AG04450 (cell line): ENCODE measurements at regions of chr12 and their contacts with region 1.

Region 1: DNA sequence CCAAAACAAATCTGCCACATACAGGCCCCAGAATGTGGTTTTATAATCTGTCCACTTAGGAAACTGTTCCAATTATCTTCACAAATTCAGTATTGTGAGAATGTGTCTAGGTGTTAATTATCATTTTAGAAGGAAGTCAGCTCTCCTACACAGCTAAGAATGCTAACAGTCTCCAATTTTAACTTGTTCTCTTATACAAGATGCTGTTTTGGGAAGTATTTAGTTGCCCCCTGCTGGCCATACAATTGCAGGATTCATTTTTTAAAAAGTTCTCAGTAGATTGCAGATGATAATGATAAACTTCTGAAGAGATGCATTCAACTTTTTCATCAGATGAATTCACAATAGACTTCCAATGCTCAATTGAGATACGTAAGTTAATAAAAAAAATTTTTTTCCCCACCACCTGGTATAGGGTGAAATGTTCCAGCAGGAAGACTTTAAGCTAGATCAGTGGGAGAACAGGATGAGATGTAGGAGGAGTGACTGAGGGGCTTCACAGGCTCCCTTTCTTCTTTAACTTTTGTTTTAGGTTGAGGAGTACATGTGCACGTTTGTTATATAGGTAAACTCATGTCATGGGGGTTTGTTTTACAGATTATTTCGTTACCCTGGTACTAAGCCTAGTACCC is 27.3 kb upstream of the OSBPL8 start:
- DNase-seq: peak; percentile 18
- H3K4me3 ChIP-seq: no peak overlapping the region
- H3K27ac ChIP-seq: no peak overlapping the region
- H3K27me3 ChIP-seq: no peaks in the 10 kb centered on the region
- CTCF ChIP-seq: peak; percentile 75

Region 2: GRCh38 chr12:76083246-76083903 is 503.5 kb before region 1 on chr12:
- CTCF ChIA-PET with region 1: interaction called, 10 read pairs
- POLR2A ChIA-PET with region 1: no interaction called
- DNase-seq: no peak
- H3K4me3 ChIP-seq: peak overlapping the region; percentile 88
- H3K27ac ChIP-seq: peak overlapping the region; percentile 92
- H3K27me3 ChIP-seq: no peaks in the 10 kb centered on the region
- CTCF ChIP-seq: no peak

Region 3: DNA sequence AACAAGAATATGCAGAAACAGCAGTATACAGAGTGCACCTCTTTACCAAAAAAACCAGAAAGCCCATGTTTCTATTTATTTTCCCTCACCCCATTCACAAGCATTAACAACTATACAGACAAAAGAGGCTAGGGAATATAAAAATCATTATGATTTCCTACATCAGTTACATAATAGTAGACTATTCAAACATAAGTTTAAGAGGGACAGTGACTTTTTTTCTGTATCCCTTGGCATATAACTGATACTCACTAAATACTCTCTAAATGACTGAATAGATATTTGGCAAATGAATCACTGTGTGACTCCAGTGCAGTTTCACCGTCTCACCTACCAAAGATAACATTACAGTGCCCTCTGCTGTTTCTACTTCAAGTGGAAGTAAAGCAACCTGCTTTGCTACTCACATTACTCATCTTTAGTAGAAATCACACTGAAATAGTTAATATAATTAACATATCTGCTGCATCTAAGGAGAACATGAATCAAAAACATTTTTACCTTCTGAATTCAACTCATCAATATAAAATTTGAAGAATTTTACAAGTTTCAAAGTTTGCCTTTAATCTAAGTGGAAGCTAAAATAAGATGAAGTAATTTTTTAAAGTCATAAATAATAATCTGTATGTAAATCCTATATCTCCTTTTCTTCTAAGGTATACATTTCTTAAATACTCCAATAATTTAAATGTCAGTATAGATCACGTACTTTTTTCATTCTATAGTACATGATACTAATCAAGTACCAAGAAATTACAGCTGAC is 131.1 kb before region 1 on chr12:
- CTCF ChIA-PET with region 1: interaction called, 14 read pairs
- POLR2A ChIA-PET with region 1: no interaction called
- DNase-seq: peak; percentile 79
- H3K4me3 ChIP-seq: no peak overlapping the region
- H3K27ac ChIP-seq: no peak overlapping the region
- H3K27me3 ChIP-seq: no peaks in the 10 kb centered on the region
- CTCF ChIP-seq: peak; percentile 76

Region 4: GRCh38 chr12:76604099-76604498 is 17.2 kb after region 1 on chr12:
- CTCF ChIA-PET with region 1: interaction called, 16 read pairs
- POLR2A ChIA-PET with region 1: no interaction called
- DNase-seq: no peak
- H3K4me3 ChIP-seq: no peak overlapping the region
- H3K27ac ChIP-seq: no peak overlapping the region
- H3K27me3 ChIP-seq: no peaks in the 10 kb centered on the region
- CTCF ChIP-seq: no peak

Region 5: DNA sequence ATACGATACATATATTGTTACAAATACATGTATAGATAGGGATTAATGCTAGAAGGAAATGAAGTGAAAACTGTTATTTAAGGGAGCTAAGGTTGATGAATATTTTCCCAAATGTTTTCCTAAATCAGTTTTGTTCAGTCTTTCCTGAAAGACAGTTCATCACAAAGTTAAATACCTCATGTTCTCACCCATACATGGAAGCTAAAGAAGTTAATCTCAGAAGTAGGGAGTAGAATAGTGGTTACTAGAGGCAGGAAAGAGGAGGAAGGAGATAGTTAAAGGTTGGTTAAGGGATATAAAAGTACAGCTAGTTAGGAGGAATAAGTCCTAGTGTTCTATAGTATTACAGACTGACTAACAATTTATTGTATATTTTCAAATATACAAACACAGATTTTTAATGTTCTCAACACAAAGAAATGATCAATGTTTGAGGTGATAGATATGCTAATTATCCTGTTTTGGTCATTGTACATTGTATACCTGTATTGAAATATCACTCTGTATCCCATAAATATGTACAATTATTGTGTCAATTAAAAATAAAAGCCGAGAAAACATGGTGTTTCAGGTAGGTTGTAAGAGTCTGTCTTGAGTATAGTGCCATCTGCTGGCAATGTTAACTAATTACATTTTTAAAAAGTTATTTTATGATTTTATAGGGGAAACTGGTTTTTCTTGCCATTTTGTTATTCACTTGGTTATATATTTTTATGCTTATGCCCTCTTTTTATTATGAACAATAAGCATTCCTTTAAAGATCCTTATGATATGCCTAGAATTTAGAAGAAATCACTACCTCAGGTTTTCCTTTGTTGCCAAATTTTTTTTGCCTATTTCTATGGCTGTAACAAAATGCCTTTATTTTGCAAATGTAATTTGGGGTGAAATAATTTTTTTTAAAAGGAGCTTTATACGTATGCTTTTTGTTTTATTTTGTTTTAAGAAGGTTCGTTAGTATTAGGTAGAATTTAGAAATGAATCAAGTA is 204.0 kb after region 1 on chr12:
- CTCF ChIA-PET with region 1: interaction called, 16 read pairs
- POLR2A ChIA-PET with region 1: no interaction called
- DNase-seq: no peak
- H3K4me3 ChIP-seq: no peak overlapping the region
- H3K27ac ChIP-seq: no peak overlapping the region
- H3K27me3 ChIP-seq: no peaks in the 10 kb centered on the region
- CTCF ChIP-seq: peak; percentile 55